Psoas muscle (tissue), 8 donors: ENCODE measurements at regions of chr6 and their contacts with region 1.

Region 1: DNA sequence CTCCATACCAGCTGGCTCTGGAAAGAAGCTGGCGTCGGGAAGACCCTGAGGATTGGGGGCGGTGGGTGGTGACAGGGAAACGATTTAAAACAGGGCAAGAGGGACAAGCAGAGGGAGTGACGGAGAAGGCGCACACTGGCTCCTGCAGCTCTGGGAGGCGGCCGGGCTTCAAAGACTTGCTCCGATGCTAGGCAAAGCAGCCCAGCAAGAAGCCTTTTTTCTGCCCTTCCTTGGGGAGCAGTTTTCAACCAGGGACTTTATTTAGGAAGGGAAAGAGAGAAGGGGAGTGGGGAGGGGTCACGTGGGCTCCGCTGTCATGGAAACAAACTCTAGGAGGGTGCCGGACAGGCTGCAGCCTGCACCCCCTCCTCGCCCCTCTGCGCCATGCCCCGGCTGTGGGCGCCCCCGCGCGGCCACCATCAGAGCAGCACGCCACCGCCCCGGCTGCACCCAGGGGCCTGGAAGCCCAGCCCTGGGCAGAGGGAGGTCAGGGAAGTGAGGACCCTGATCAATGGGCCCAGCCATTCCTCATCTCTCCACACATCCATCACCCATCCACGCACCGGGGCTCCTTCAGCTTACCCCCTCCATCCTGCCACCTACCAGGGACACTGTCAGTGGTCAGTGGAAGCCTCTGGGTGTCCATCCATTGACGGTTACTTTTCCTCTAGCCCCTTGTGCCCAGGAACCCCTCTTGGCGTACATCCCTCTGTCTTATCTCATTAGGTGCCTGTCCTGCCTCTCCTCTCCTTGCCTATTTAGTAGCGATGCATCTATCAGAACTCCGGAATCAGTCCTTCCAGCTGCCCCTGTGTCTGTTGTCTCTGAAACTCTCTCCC is 66.6 kb upstream of the CCDC167 start:
- DNase-seq: peak; percentile 37 to 65
- ATAC-seq: peak; percentile 64 to 95 (median 80)
- H3K4me3 ChIP-seq: peak overlapping the region; percentile 40
- H3K27ac ChIP-seq: no peak overlapping the region
- H3K4me1 ChIP-seq: no peaks in the 10 kb centered on the region
- H3K27me3 ChIP-seq: peaks cover 0 to 34% (median 10%) of the 10 kb centered on the region in 3 donors
- CTCF ChIP-seq: peak; percentile 76

Region 2: DNA sequence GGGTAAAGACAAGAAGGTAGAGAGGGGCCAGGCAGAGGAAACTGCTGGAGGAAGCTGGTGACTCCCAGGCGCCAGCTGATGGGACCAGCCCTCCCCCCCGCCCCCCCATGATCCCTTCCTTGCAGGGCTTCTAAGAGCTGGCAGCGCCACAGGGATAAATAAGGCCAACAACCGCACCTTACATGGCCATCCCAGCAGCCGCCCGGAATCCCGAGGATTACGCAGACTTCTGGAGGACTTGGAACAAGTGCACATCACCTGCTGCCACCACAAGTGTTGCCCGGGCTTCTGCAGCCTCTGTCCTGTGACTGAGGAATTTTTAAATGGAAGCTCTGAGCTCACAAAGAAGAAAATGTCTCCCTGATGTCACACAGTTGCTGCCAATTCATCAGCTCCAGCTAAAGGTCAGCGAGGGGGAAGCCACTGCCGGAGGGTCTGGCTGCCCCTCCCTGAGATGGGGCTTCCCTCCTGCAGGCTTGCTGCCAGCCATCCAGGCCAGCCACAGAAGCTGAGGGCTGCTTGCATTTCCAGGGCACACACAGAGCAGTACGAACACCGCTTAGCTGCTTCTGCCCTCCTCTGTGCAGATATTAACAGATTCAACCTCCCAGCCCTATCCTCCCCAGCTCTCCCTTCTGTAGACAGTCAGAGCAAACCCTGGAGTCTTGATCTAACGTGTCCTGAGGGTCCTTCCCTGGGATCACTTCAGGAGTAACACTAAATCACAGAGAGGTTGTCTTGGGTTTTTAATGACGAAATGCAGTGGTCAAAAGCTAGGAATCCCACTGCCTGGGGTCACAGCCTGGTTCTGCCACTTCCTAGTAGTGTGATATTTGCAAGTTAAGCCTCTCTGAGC is 435.0 kb before region 1 on chr6:
- intact Hi-C with region 1: no loop called
- DNase-seq: peak; percentile 82 to 93
- ATAC-seq: peak; percentile 82 to 88 (median 84)
- H3K4me3 ChIP-seq: peak overlapping the region; percentile 29
- H3K27ac ChIP-seq: peak overlapping the region; percentile 98
- H3K4me1 ChIP-seq: peaks cover 66% of the 10 kb centered on the region
- H3K27me3 ChIP-seq: no peaks in the 10 kb centered on the region
- CTCF ChIP-seq: no peak

Region 3: DNA sequence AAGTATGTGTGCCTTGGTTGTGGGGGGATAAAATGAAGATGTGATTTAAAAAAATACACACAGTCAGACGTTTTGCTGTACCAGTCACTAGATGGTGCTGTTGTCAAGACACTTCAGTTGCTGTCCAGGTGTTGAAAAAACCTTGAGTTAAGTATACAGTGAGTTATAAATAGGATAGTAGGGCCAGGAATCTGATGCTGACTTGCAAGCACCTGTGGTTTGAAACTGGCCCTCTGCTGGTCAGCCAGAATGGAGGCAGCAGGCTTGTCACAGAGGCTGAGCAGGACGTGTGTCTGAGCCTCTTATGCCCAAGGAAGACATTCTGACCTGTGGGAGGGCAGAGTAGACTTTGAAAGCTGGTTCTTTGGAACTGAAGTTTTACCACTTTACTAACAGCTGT is 184.8 kb before region 1 on chr6:
- intact Hi-C with region 1: loop called in 1 of 2 experiments (anchors 5 kb)
- DNase-seq: no peak
- ATAC-seq: peak; percentile 74 to 90 (median 87)
- H3K4me3 ChIP-seq: no peak overlapping the region
- H3K27ac ChIP-seq: no peak overlapping the region
- H3K4me1 ChIP-seq: no peaks in the 10 kb centered on the region
- H3K27me3 ChIP-seq: no peaks in the 10 kb centered on the region
- CTCF ChIP-seq: peak; percentile 60

Region 4: DNA sequence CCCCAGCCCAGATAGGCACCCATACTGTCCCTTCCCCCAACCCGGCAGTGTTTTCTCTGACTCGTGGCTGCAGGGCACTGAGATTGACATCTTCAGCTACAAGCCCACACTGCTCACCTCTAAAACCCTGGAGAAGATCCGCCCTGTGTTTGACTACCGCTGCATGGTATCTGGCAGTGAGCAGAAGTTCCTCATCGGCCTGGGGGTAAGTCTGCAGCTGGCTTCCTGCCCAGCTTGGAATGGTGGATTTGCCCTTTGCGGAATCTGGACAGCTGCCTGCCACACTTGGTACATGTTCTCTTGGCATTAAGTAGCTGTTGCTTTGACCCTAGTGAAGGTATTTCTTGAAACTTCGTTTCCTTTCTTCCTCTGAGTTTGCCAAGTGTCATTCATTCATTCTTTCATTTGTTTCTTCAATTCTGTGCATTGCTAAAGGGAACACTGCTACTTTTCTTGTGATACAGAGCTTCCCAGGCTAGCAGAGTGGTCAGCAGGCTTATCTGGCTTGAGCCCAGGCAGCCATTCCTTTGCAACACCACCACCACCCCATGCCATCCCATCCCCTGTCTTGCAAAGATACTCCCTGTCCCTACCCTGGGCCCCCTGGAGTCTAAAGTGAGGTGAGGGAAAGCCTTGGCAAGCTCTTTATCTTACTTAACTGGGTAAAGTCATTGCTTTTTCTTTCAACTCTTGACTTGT is 92.8 kb before region 1 on chr6:
- intact Hi-C with region 1: no loop called
- DNase-seq: peak; percentile 49 to 75
- ATAC-seq: peak; percentile 68 to 92 (median 80)
- H3K4me3 ChIP-seq: no peak overlapping the region
- H3K27ac ChIP-seq: no peak overlapping the region
- H3K4me1 ChIP-seq: peaks cover 13% of the 10 kb centered on the region
- H3K27me3 ChIP-seq: no peaks in the 10 kb centered on the region
- CTCF ChIP-seq: no peak

Region 5: DNA sequence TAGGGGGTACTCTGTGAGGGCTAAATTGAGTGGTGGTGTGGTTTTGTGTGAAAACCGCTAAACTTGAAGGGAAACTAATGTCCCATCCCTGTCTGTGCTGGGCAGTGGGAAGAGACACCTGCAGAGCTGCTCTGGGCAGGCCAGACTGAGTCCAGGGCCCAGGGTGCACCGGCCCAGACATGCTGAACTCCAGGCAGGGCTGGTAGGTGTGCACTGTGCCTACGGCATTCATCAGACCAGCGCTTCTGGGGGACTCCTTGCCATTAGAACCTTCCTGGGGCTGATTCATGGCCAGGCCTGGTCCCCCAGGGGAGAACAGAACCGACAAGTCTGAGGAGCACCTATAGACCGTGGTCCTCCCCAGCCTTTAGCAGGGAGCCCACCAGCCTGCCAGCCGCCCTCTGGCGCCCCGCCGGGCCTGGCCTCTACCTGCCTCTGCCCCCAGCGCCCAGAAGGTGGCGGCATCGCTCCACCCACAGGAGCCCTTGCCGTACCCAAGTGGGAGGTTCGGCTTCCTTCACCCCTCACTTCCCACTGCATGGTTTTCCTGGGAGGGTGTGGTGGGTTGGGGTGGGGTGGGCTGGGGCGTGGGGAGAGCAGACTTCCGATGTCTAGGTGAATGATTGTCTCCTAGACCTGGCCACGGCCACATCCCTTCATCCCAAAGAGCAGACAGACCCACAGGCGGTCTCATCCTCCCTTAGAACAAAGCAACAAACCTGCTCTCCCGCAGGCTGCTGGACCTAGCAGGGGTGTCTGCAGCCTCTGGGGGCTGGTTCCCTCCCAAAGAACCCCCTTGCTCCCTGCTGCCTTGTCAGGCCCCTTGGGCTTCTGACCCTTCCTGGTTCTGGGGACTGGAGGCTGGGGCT is 82.2 kb before region 1 on chr6:
- intact Hi-C with region 1: loop called in 1 of 2 experiments (anchors 5 kb)
- DNase-seq: peak; percentile 46 to 81
- ATAC-seq: peak; percentile 76 to 88 (median 80)
- H3K4me3 ChIP-seq: no peak overlapping the region
- H3K27ac ChIP-seq: no peak overlapping the region
- H3K4me1 ChIP-seq: no peaks in the 10 kb centered on the region
- H3K27me3 ChIP-seq: no peaks in the 10 kb centered on the region
- CTCF ChIP-seq: peak; percentile 71

Region 6: GRCh38 chr6:37582306-37582705 is 16.0 kb after region 1 on chr6:
- intact Hi-C with region 1: loop called in 1 of 2 experiments (anchors 1 kb)
- DNase-seq: no peak
- ATAC-seq: no peak
- H3K4me3 ChIP-seq: no peak overlapping the region
- H3K27ac ChIP-seq: no peak overlapping the region
- H3K4me1 ChIP-seq: no peaks in the 10 kb centered on the region
- H3K27me3 ChIP-seq: peaks cover 0 to 13% (median 0%) of the 10 kb centered on the region in 3 donors
- CTCF ChIP-seq: no peak

Region 7: GRCh38 chr6:37686111-37686510 is 119.8 kb after region 1 on chr6:
- intact Hi-C with region 1: no loop called
- DNase-seq: no peak
- ATAC-seq: no peak
- H3K4me3 ChIP-seq: no peak overlapping the region
- H3K27ac ChIP-seq: no peak overlapping the region
- H3K4me1 ChIP-seq: no peaks in the 10 kb centered on the region
- H3K27me3 ChIP-seq: peaks cover 0 to 3% (median 0%) of the 10 kb centered on the region in 3 donors
- CTCF ChIP-seq: no peak